CD14-positive monocyte (primary cell): ENCODE measurements at regions of chr19 and their contacts with region 1.

Region 1: DNA sequence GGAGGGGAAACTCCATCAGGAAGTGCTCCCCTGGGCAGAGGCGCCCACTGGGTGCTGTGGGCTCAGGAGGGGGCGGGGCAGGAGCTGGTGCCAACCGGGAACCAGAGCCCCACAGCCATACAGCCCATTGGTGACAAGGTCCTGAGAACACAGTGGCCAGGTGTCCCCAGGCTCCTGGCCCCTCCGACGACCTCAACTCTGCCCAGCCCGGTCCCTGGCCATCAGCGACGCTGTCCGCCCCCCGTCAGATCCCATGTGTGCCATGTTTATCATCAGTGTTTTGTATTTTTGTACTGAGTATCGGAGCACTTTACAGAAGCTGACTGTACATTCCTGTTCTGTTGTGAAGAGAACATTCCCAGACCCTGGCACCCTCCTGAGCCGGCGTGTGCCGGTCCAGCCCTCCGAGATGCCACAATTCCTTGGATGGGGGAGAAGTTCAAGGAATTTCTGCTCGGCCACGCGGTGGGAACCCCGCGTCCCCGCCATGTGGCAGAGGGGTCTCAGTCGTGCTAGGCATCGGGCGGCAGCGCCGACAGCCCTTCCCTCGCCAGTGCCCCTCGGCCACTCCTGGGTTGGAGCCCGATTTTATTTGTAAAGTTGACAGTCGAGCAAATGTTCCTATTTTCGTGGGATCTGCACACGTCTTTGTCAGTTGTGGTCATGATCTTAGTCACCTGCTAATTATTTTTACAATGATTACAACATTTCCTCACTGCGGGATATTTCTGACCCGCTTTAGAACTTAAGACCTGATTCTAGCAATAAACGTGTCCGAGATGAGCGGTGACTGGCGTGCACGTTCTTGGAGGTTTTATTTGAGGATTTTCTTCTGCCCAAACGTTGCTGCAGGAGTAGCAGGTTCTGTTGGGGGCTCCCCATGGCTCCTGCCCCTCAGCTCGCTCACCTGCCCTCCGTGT is 16.9 kb downstream of the PEX11G start:
- DNase-seq: peak; percentile 63 to 75 (median 70)
- H3K4me3 ChIP-seq: no peak overlapping the region
- H3K4me3 Mint-ChIP-seq: no peak overlapping the region
- H3K27ac ChIP-seq: peak overlapping the region; percentile 61 to 67
- H3K27ac Mint-ChIP-seq: peak overlapping the region; percentile 72 to 94 (median 90)
- H3K4me1 ChIP-seq: peaks cover 24 to 27% of the 10 kb centered on the region in 2 donors
- H3K4me1 Mint-ChIP-seq: peaks cover 18% of the 10 kb centered on the region
- H3K27me3 ChIP-seq: no peaks in the 10 kb centered on the region
- H3K27me3 Mint-ChIP-seq: peaks cover 0 to 2% (median 1%) of the 10 kb centered on the region in 3 donors
- CTCF ChIP-seq: no peak

Region 2: GRCh38 chr19:7415163-7415858 is 56.6 kb before region 1 on chr19:
- intact Hi-C with region 1: no loop called
- DNase-seq: no peak
- H3K4me3 ChIP-seq: no peak overlapping the region
- H3K4me3 Mint-ChIP-seq: no peak overlapping the region
- H3K27ac ChIP-seq: no peak overlapping the region
- H3K27ac Mint-ChIP-seq: peak overlapping the region in 6 of 7 donors; percentile 24 to 69 (median 60)
- H3K4me1 ChIP-seq: no peaks in the 10 kb centered on the region
- H3K4me1 Mint-ChIP-seq: peaks cover 3% of the 10 kb centered on the region
- H3K27me3 ChIP-seq: no peaks in the 10 kb centered on the region
- H3K27me3 Mint-ChIP-seq: peaks cover 0 to 3% (median 0%) of the 10 kb centered on the region in 3 donors
- CTCF ChIP-seq: no peak

Region 3: DNA sequence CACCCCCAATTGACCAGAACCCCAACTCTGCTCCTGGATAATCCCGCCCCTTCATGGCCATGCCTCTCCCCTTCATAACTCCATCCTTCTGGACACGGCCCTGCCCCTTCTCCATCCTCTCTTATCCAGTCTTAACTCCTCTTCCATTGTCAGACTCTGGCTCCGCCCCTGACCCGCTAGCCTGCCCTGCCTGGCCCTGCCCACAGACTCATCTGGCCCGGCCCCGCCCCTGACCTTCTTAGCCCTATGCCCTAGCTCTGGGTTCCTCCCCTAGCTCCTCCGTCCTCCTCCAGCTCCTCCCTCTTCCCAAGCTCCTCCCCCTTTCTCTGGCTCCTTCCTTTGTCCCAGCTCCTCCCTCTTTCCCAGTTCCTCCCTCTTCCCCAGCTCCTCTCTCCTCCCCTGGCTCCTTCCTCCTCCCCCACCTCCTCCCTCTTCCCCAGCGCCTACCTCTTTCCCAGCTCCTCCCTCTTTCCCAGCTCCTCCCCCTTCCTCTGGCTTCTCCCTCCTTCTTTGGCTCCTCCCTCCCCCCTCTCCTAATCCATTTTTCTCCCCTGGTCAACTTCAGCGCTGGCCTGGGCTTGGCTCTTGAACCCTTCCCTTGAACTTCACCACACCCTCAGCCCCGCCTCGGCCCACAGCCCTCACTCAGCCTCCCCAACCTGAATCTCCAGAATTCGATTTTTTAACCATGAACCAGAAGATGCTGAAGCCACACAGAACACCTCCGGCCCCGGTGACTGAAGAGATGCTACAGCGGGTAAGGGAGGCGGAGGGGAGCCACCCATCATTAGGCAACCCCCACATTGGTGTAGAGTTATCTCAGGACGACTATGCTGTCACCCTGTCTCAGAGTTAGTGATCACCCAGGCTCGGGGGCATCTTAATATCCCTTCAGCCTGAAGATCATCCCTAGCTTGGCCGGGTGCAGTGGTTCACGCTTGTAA is 34.7 kb after region 1 on chr19:
- intact Hi-C with region 1: loop called (anchors 5 kb)
- DNase-seq: peak; percentile 76 to 77 (median 77)
- H3K4me3 ChIP-seq: no peak overlapping the region
- H3K4me3 Mint-ChIP-seq: peak overlapping the region; percentile 43 to 64
- H3K27ac ChIP-seq: no peak overlapping the region
- H3K27ac Mint-ChIP-seq: peak overlapping the region in 5 of 7 donors; percentile 31 to 86 (median 59)
- H3K4me1 ChIP-seq: peaks cover 23 to 35% of the 10 kb centered on the region in 2 donors
- H3K4me1 Mint-ChIP-seq: peaks cover 27% of the 10 kb centered on the region
- H3K27me3 ChIP-seq: peaks cover 2 to 28% of the 10 kb centered on the region in 2 donors
- H3K27me3 Mint-ChIP-seq: peaks cover 26 to 47% (median 46%) of the 10 kb centered on the region in 3 donors
- CTCF ChIP-seq: no peak

Region 4: GRCh38 chr19:7522072-7522922 is 50.3 kb after region 1 on chr19 and contains the start of gene MCOLN1:
- intact Hi-C with region 1: loop called in 1 of 2 experiments (anchors 2 kb)
- DNase-seq: peak; percentile 98 to 99 (median 98)
- H3K4me3 ChIP-seq: peak within 1 kb of the TSS; percentile 56 to 89 (median 69)
- H3K4me3 Mint-ChIP-seq: peak within 1 kb of the TSS; percentile 85 to 89
- H3K27ac ChIP-seq: peak within 1 kb of the TSS; percentile 25 to 77
- H3K27ac Mint-ChIP-seq: peak within 1 kb of the TSS; percentile 67 to 92 (median 90)
- H3K4me1 ChIP-seq: peaks cover 23 to 30% of the 10 kb centered on the region in 2 donors
- H3K4me1 Mint-ChIP-seq: peaks cover 26% of the 10 kb centered on the region
- H3K27me3 ChIP-seq: no peaks in the 10 kb centered on the region
- H3K27me3 Mint-ChIP-seq: peaks cover 6 to 9% (median 7%) of the 10 kb centered on the region in 3 donors
- CTCF ChIP-seq: no peak
- polyA plus RNA-seq, gene MCOLN1: 32.8 to 133 (median 34.3) TPM